ENCODE measurements at regions of chr2 and their contacts with region 1.

Region 1: GRCh38 chr2:66434679-66435548 is at the start of gene MEIS1:
- DNase-seq: peak; percentile 92
- ATAC-seq: peak; percentile 91
- total RNA-seq, gene MEIS1: 40.1 TPM

Region 2: DNA sequence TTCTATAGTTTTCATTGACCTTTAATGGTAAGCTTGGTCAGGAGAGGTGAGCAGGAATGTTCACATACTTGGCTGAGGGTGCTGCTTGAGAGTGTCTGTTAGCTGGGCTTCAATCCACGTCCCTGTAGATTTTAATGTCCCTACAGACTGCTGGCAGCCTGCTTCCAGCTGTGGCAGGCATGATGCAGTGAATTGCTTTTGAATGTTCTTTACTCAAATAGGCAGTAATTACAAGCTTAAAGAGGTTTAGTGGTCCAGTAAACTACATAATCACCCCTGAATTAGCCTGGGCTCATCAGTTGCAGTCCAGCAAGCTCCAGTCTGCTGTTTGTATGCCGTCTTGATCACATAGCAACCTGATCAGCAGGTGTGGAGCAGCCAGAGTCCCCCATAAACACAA is 102.1 kb after region 1 on chr2:
- intact Hi-C with region 1: no loop called
- DNase-seq: no peak
- ATAC-seq: peak; percentile 61

Region 3: GRCh38 chr2:66574701-66575624 is 140.0 kb after region 1 on chr2:
- intact Hi-C with region 1: loop called (anchors 2 kb)
- DNase-seq: no peak
- ATAC-seq: peak; percentile 73

Region 4: GRCh38 chr2:67322353-67323001 is 887.6 kb after region 1 on chr2:
- intact Hi-C with region 1: loop called (anchors 5 kb)
- DNase-seq: no peak
- ATAC-seq: peak; percentile 63

Region 5: GRCh38 chr2:67561457-67561965 is 1126.6 kb after region 1 on chr2:
- intact Hi-C with region 1: loop called (anchors 10 kb)
- DNase-seq: peak; percentile 66
- ATAC-seq: peak; percentile 86

Region 6: DNA sequence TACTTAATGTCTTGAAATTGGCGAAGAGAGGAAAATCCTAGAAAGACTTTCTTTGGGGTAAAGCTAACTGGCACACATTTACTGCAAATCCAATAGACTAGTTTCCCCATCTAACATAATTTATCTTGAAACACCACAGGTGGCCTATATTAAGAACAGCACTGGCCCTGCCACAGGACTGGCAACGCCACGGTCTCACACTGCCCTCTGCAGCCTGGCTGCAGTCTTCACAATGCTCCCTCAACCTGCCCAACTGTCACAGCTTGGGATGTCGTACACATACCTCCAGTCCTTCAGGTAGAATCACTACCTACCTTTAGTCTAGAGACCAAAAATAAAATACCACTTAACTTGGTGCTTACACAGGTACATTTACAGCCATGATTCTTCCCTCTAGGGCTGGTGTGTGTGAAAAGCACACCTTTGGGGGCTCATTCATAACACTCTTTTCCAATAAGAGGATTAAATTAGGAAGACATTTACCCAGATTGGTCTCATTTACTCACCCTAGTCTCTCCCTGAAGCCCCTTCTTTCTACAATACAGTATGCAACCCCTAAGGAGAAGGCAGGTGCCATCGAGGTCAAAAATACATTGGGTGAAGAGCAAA is 1405.7 kb after region 1 on chr2:
- intact Hi-C with region 1: loop called (anchors 5 kb)
- DNase-seq: peak; percentile 70
- ATAC-seq: peak; percentile 96

Measured in Right ventricle myocardium inferior (tissue), 1 donor.